H1 (cell line): ENCODE measurements at regions of chr17 and their contacts with region 1.

Region 1: GRCh38 chr17:80195731-80196529 is 24.2 kb downstream of the SGSH start:
- DNase-seq: peak in 1 of 2 experiments; percentile 90
- H3K4me3 ChIP-seq: no peak overlapping the region
- H3K27ac ChIP-seq: no peak overlapping the region; the same call in 1 of the 2 replicates
- H3K4me1 ChIP-seq: peaks cover 0 to 4% (median 0%) of the 10 kb centered on the region in 4 experiments; a peak in 2 of 7 replicates
- H3K27me3 ChIP-seq: no peaks in the 10 kb centered on the region; a peak in 1 of 7 replicates
- CTCF ChIP-seq: peak; percentile 91 to 92 (median 91)
- EP300 ChIP-seq: no peak
- POLR2A ChIP-seq: no peak
- RAD21 ChIP-seq: peak; percentile 94 to 96

Region 2: GRCh38 chr17:79942591-79943346 is 253.2 kb before region 1 on chr17:
- CTCF ChIA-PET with region 1: no interaction called
- POLR2A ChIA-PET with region 1: no interaction called
- DNase-seq: no peak
- H3K4me3 ChIP-seq: no peak overlapping the region
- H3K27ac ChIP-seq: no peak overlapping the region; the same call in 1 of the 2 replicates
- H3K4me1 ChIP-seq: peaks cover 0 to 8% (median 2%) of the 10 kb centered on the region in 4 experiments; a peak in 4 of 7 replicates
- H3K27me3 ChIP-seq: no peaks in the 10 kb centered on the region
- CTCF ChIP-seq: no peak
- EP300 ChIP-seq: no peak
- POLR2A ChIP-seq: no peak
- RAD21 ChIP-seq: no peak

Region 3: GRCh38 chr17:79965806-79966205 is 230.1 kb before region 1 on chr17:
- CTCF ChIA-PET with region 1: no interaction called
- POLR2A ChIA-PET with region 1: no interaction called
- DNase-seq: no peak
- H3K4me3 ChIP-seq: no peak overlapping the region
- H3K27ac ChIP-seq: no peak overlapping the region
- H3K4me1 ChIP-seq: peaks cover 0 to 3% (median 1%) of the 10 kb centered on the region in 4 experiments; a peak in 3 of 7 replicates
- H3K27me3 ChIP-seq: no peaks in the 10 kb centered on the region
- CTCF ChIP-seq: no peak
- EP300 ChIP-seq: no peak
- POLR2A ChIP-seq: no peak
- RAD21 ChIP-seq: no peak

Region 4: GRCh38 chr17:80147035-80147836 is 48.7 kb before region 1 on chr17 and contains the start of gene EIF4A3:
- CTCF ChIA-PET with region 1: interaction called, 14 read pairs
- POLR2A ChIA-PET with region 1: interaction called, 6 read pairs
- DNase-seq: peak; percentile 97 to 98
- H3K4me3 ChIP-seq: peak within 1 kb of the TSS; percentile 84 to 95 (median 88)
- H3K27ac ChIP-seq: peak within 1 kb of the TSS; percentile 83
- H3K4me1 ChIP-seq: peaks cover 2 to 20% (median 6%) of the 10 kb centered on the region in 4 experiments
- H3K27me3 ChIP-seq: no peaks in the 10 kb centered on the region; a peak in 2 of 7 replicates
- CTCF ChIP-seq: peak in 1 of 3 experiments; percentile 10; a peak in 1 of 4 replicates
- EP300 ChIP-seq: no peak
- POLR2A ChIP-seq: peak; percentile 55 to 74
- RAD21 ChIP-seq: peak; percentile 14 to 24; a peak in 2 of 4 replicates
- total RNA-seq, gene EIF4A3: 146 and 155 TPM in 2 replicates

Region 5: GRCh38 chr17:80177986-80178590 is 17.8 kb before region 1 on chr17:
- CTCF ChIA-PET with region 1: interaction called, 73 read pairs
- POLR2A ChIA-PET with region 1: interaction called, 6 read pairs
- DNase-seq: no peak
- H3K4me3 ChIP-seq: no peak overlapping the region
- H3K27ac ChIP-seq: no peak overlapping the region
- H3K4me1 ChIP-seq: peaks cover 0 to 3% (median under 1%) of the 10 kb centered on the region in 4 experiments; a peak in 2 of 7 replicates
- H3K27me3 ChIP-seq: no peaks in the 10 kb centered on the region
- CTCF ChIP-seq: no peak
- EP300 ChIP-seq: no peak
- POLR2A ChIP-seq: no peak
- RAD21 ChIP-seq: no peak

Region 6: DNA sequence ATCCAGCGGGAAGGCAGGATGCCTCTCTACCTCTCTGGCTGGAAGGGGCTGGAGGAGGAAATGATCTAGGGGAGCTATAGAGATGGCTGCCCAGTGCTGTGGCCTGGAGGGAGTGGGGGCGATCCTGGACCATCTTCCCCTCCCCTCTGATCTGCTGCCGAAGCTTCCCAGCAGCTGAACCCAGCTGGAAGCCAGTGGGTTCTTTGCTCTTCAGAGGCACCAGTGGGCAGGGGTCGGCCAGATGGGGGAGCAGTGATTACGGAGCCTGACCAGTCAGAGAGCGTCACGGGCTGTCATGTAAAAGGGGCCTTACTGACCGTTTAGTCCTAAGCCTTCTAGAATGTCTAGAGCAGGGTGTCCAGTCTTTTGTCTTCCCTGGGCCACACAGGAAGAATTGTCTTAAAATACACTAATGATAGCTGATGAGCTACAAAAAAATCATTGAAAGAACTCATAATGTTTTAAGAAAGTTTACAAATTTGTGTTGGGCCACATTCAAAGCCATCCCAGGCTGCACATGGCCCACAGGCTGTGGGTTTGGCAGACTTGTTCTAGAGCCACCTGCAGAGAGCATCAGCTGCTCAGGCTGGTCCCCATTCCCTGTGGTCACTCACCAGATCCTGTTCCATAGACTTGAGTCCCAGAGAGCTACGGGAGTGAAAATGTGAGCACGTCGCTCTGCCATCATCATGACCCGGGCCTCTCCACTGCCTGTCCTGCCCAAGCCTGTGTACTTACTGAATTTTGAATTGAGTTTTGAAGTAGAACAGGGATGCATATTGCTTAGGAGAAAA is 31.0 kb after region 1 on chr17:
- CTCF ChIA-PET with region 1: interaction called, 19 read pairs
- POLR2A ChIA-PET with region 1: no interaction called
- DNase-seq: no peak
- H3K4me3 ChIP-seq: no peak overlapping the region
- H3K27ac ChIP-seq: no peak overlapping the region
- H3K4me1 ChIP-seq: peaks cover 0 to 16% (median 6%) of the 10 kb centered on the region in 4 experiments; a peak in 6 of 7 replicates
- H3K27me3 ChIP-seq: no peaks in the 10 kb centered on the region
- CTCF ChIP-seq: no peak
- EP300 ChIP-seq: no peak
- POLR2A ChIP-seq: no peak
- RAD21 ChIP-seq: no peak

Region 7: DNA sequence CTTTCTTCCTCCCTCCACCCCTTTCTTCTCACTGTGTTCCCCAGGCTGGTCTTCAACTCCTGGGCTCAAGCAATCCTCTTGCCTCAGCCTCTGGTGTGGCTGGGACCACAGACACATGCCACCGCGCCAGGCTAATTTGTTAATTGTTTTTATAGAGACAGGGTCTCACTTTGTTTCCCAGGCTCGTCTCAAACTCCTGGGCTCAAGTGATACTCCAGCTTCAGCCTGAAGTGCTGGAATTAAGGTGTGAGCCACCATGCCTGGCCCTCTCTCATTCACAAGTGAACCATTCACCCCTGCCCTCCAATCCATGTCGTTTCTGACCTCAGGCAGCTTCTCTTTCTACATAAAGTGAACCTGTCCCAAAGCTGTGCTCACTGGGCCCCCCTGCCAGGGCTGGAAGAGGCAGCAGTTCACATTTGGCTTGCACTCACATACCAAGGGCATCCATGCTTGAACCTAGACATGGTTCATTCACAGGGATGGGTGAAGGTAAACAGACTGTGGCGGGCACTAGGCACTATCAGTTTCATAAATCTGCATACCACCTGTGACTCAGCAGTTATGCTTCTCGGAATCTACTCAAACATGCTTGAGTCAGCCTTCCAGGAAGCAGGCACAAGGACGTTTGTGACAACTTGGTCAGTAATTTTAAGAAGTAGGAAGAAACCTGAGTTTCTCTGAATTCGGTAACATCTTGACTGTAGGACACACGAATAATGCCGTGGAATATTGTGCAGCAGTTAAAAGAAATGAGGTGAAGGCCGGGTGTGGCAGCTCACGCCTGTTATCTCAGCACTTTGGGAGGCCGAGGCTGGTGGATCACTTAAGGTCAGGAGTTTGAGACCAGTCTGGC is 58.7 kb after region 1 on chr17:
- CTCF ChIA-PET with region 1: interaction called, 34 read pairs
- POLR2A ChIA-PET with region 1: no interaction called
- DNase-seq: no peak
- H3K4me3 ChIP-seq: no peak overlapping the region
- H3K27ac ChIP-seq: no peak overlapping the region
- H3K4me1 ChIP-seq: peaks cover 2 to 15% (median 8%) of the 10 kb centered on the region in 4 experiments; a peak in 5 of 7 replicates
- H3K27me3 ChIP-seq: no peaks in the 10 kb centered on the region
- CTCF ChIP-seq: no peak
- EP300 ChIP-seq: no peak
- POLR2A ChIP-seq: no peak
- RAD21 ChIP-seq: no peak

Region 8: GRCh38 chr17:80297996-80298560 is 102.1 kb after region 1 on chr17:
- CTCF ChIA-PET with region 1: interaction called, 13 read pairs
- POLR2A ChIA-PET with region 1: no interaction called
- DNase-seq: no peak
- H3K4me3 ChIP-seq: no peak overlapping the region
- H3K27ac ChIP-seq: no peak overlapping the region
- H3K4me1 ChIP-seq: no peaks in the 10 kb centered on the region
- H3K27me3 ChIP-seq: no peaks in the 10 kb centered on the region; a peak in 1 of 7 replicates
- CTCF ChIP-seq: no peak
- EP300 ChIP-seq: no peak
- POLR2A ChIP-seq: no peak
- RAD21 ChIP-seq: no peak

Region 9: DNA sequence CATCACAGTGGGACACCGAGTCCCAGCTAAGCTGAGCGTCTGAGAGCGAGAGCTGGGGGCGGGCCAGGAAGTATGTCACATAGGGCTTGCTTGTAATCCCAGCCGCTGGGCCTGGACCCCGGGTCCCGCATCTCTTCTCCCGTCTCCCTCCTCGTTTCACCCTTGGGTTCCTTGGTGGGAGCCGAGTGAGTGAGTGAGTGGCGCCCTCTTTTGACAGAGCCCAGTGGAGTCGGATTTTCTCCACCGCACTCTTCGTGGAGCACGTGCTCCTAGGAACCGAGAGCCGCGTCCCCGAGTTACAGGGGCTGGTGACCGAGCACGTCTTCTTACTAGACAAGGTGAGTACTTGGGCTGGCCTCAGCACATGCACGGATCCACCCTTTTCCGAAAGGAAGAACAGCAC is 168.3 kb after region 1 on chr17:
- CTCF ChIA-PET with region 1: interaction called, 32 read pairs
- POLR2A ChIA-PET with region 1: interaction called, 3 read pairs
- DNase-seq: peak in 1 of 2 experiments; percentile 76
- H3K4me3 ChIP-seq: no peak overlapping the region
- H3K27ac ChIP-seq: no peak overlapping the region
- H3K4me1 ChIP-seq: no peaks in the 10 kb centered on the region
- H3K27me3 ChIP-seq: no peaks in the 10 kb centered on the region
- CTCF ChIP-seq: peak; percentile 59 to 69 (median 63)
- EP300 ChIP-seq: no peak
- POLR2A ChIP-seq: no peak
- RAD21 ChIP-seq: peak; percentile 56 to 70